Activated B cell treated with CpG ODN at 0.5 μM for 24 hours (primary cell): ENCODE measurements at regions of chr19 and their contacts with region 1.

Region 1: DNA sequence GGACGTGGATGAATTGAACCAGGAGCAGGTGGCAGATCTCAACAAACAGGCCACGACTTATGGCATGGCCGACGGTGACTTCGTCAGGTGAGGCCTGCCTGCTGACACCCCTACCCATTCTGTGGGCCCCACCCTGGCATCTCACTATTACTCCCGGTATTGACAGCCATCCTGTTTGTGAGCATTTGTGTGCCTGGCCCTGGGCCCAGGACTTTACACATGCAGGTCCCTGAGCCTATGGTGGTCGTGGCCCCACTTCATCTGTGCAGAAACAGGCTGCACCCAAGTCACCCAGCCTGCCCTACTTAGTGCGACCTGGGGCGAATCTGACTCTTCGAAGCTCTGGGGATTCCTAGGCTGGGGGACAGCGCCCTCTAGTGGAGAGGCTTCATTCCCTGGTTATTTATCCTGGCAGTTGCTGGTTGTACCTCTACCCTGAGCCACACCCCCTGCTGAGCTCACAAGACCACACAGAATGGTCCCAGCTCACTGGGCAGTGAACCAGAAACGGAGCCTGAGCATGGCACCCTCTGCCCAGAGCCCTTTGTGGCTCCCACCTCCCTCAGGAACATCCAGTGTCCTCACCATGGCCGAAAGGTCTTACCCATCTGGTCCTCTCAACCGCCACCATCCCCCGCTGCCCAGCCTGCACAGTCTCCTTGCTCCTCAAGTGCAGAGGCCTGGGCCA is 16.9 kb downstream of the ZNF296 start:
- DNase-seq: peak; percentile 73
- ATAC-seq: peak; percentile 90
- H3K4me3 Mint-ChIP-seq: no peak overlapping the region
- H3K27ac Mint-ChIP-seq: peak overlapping the region; percentile 76
- H3K4me1 Mint-ChIP-seq: peaks cover 38% of the 10 kb centered on the region
- H3K27me3 Mint-ChIP-seq: no peaks in the 10 kb centered on the region
- CTCF ChIP-seq: peak; percentile 46

Region 2: DNA sequence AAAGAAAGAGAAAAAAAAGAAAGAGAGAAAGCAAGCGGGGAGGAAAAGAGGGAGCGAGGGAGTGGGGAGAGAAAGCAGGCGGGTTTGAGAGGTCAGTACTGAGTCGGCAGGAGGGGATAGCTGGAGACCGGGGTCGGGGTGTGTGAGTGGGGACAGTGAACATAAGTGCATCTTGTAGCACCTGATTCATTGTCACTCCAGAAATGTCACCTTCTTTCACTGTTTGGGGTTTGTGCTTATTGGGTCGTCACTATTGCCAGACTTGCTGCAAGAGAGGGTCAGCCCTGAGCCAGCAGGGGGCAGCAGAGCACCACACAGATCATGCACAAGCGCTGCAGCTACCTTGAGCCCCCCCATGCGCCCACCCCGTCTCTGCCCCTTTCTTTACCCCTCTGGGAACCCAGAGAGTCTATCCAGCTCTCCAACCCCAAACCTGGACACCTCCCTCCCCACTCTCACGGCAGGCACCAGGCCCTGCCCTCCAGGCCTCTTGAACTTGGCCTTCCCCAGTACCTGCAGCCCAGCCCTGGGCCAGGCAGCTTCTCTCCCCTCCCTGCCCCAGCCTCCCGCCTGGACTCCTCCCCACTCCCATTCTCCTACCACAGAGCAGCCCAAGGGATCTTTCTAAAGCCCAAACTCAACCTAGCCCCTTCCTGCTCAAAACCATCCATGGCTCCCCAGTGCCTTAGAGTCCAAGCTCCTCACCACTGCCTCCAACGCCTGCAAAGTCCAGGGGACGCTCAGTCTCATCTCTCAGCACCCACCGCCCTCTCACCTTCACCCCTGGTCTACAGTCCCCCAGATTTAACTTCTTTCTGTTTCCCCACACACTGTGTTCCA is 370.1 kb before region 1 on chr19:
- CTCF ChIA-PET with region 1: no interaction called
- POLR2A ChIA-PET with region 1: no interaction called
- intact Hi-C with region 1: loop called (anchors 1 kb)
- DNase-seq: peak; percentile 73
- ATAC-seq: peak; percentile 51
- H3K4me3 Mint-ChIP-seq: no peak overlapping the region
- H3K27ac Mint-ChIP-seq: no peak overlapping the region
- H3K4me1 Mint-ChIP-seq: peaks cover 51% of the 10 kb centered on the region
- H3K27me3 Mint-ChIP-seq: peaks cover 11% of the 10 kb centered on the region
- CTCF ChIP-seq: no peak

Region 3: GRCh38 chr19:44903602-44904425 is 155.6 kb before region 1 on chr19:
- CTCF ChIA-PET with region 1: interaction called, 5 read pairs
- POLR2A ChIA-PET with region 1: no interaction called
- intact Hi-C with region 1: loop called (anchors 1 kb)
- DNase-seq: peak; percentile 78
- ATAC-seq: peak; percentile 68
- H3K4me3 Mint-ChIP-seq: no peak overlapping the region
- H3K27ac Mint-ChIP-seq: no peak overlapping the region
- H3K4me1 Mint-ChIP-seq: peaks cover 18% of the 10 kb centered on the region
- H3K27me3 Mint-ChIP-seq: peaks cover 15% of the 10 kb centered on the region
- CTCF ChIP-seq: peak; percentile 96

Region 4: GRCh38 chr19:44988896-44989556 is 70.4 kb before region 1 on chr19:
- CTCF ChIA-PET with region 1: interaction called, 30 read pairs
- POLR2A ChIA-PET with region 1: interaction called, 5 read pairs
- intact Hi-C with region 1: loop called (anchors 1 kb)
- DNase-seq: peak; percentile 57
- ATAC-seq: peak; percentile 97
- H3K4me3 Mint-ChIP-seq: no peak overlapping the region
- H3K27ac Mint-ChIP-seq: no peak overlapping the region
- H3K4me1 Mint-ChIP-seq: no peaks in the 10 kb centered on the region
- H3K27me3 Mint-ChIP-seq: no peaks in the 10 kb centered on the region
- CTCF ChIP-seq: no peak

Region 5: GRCh38 chr19:45016388-45017319 is 42.8 kb before region 1 on chr19:
- CTCF ChIA-PET with region 1: interaction called, 6 read pairs
- POLR2A ChIA-PET with region 1: interaction called, 4 read pairs
- intact Hi-C with region 1: loop called (anchors 1 kb)
- DNase-seq: peak; percentile 62
- ATAC-seq: peak; percentile 81
- H3K4me3 Mint-ChIP-seq: peak overlapping the region; percentile 64
- H3K27ac Mint-ChIP-seq: peak overlapping the region; percentile 89
- H3K4me1 Mint-ChIP-seq: peaks cover 22% of the 10 kb centered on the region
- H3K27me3 Mint-ChIP-seq: no peaks in the 10 kb centered on the region
- CTCF ChIP-seq: no peak

Region 6: GRCh38 chr19:45038931-45039893 is 20.2 kb before region 1 on chr19 and contains the start of gene CLASRP:
- CTCF ChIA-PET with region 1: interaction called, 8 read pairs
- POLR2A ChIA-PET with region 1: interaction called, 14 read pairs
- intact Hi-C with region 1: no loop called
- DNase-seq: peak; percentile 90
- ATAC-seq: peak; percentile 89
- H3K4me3 Mint-ChIP-seq: peak within 1 kb of the TSS; percentile 98
- H3K27ac Mint-ChIP-seq: peak within 1 kb of the TSS; percentile 91
- H3K4me1 Mint-ChIP-seq: peaks cover 38% of the 10 kb centered on the region
- H3K27me3 Mint-ChIP-seq: no peaks in the 10 kb centered on the region
- CTCF ChIP-seq: no peak
- total RNA-seq, gene CLASRP: 133 and 172 TPM in 2 replicates

Region 7: DNA sequence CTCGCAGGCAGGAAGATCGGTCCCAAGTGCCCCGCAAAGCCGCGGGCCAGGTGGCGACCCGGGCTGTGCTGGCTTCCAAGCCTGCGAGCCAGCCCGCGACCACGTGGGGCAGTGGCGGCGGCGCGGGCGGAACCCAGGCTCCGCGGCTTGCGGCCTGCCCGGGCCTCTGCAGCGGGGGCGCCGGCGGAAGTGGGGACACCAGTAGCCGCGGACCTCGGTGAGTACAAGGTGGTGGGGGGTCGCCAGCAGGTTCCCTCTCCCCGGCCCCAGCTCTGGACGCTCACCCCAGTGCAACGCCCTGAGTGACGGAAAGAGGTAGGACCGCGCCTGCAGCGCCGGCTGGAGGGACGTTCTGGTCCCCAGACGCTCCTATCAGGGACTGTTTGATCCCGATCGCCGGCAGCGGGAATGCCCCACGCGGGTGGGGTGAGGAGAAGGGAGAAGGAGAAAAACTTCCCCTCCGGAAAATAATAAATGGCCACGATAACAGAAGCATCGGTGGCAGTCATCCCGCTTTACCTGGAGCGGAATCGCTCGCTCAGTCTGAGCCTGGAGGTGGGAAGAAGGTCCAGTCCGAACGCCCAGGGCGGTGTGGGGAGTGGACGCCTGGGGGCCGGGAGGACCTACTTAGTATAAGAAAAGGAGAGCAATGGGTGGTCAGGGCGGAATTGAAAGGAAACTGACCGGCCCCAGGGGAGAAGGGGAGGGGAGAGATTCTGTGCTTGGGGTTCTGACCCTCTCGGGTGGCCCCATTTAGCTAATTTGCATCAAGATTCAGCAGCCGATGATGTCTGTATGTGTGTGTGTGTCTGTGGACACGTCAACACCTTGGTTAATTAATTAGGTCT is 19.9 kb after region 1 on chr19 and contains the start of gene GEMIN7:
- CTCF ChIA-PET with region 1: interaction called, 9 read pairs
- POLR2A ChIA-PET with region 1: interaction called, 3 read pairs
- intact Hi-C with region 1: loop called (anchors 1 kb)
- DNase-seq: peak; percentile 85
- ATAC-seq: peak; percentile 33
- H3K4me3 Mint-ChIP-seq: peak within 1 kb of the TSS; percentile 97
- H3K27ac Mint-ChIP-seq: peak within 1 kb of the TSS; percentile 90
- H3K4me1 Mint-ChIP-seq: peaks cover 60% of the 10 kb centered on the region
- H3K27me3 Mint-ChIP-seq: no peaks in the 10 kb centered on the region
- CTCF ChIP-seq: no peak
- total RNA-seq, gene GEMIN7: 37.0 and 38.7 TPM in 2 replicates

Region 8: GRCh38 chr19:45211751-45212381 is 152.4 kb after region 1 on chr19:
- CTCF ChIA-PET with region 1: no interaction called
- POLR2A ChIA-PET with region 1: no interaction called
- intact Hi-C with region 1: no loop called
- DNase-seq: no peak
- ATAC-seq: no peak
- H3K4me3 Mint-ChIP-seq: no peak overlapping the region
- H3K27ac Mint-ChIP-seq: no peak overlapping the region
- H3K4me1 Mint-ChIP-seq: no peaks in the 10 kb centered on the region
- H3K27me3 Mint-ChIP-seq: peaks cover 26% of the 10 kb centered on the region
- CTCF ChIP-seq: no peak